ENCODE measurements at regions of chr3 and their contacts with region 1.

Region 1: GRCh38 chr3:133040696-133041523 is 2.7 kb downstream of the TMEM108 start:
- DNase-seq: peak; percentile 68 to 80 (median 72)
- ATAC-seq: peak; percentile 80 to 91 (median 88)
- H3K4me3 ChIP-seq: no peak overlapping the region
- H3K27ac ChIP-seq: no peak overlapping the region
- H3K4me1 ChIP-seq: peaks cover 0 to 19% (median 5%) of the 10 kb centered on the region in 12 donors
- H3K27me3 ChIP-seq: peaks cover 9 to 38% (median 24%) of the 10 kb centered on the region in 9 donors
- CTCF ChIP-seq: peak; percentile 53 to 80 (median 73)
- POLR2A ChIP-seq: no peak

Region 2: DNA sequence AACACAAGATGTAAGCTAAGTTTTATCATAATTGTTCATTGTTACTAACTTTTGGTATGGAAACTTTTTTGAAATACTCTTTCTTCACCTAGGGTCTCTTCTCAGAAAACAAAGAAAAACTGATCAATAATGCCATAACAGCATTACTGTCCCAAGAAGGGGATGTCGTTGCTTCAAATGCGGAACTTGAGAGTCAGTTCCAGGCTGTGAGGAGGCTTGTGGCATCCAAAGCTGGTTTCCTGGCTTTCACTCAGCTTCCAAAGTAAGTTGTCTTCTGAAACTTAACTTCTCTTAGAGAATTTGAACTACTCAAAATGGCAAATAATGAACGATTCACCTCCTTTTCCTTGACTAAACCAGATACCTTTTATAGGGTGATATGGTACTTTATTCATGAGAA is 584.3 kb before region 1 on chr3:
- intact Hi-C with region 1: no loop called
- DNase-seq: no peak
- ATAC-seq: no peak
- H3K4me3 ChIP-seq: no peak overlapping the region
- H3K27ac ChIP-seq: no peak overlapping the region
- H3K4me1 ChIP-seq: peaks cover 0 to 8% (median 0%) of the 10 kb centered on the region in 12 donors
- H3K27me3 ChIP-seq: no peaks in the 10 kb centered on the region
- CTCF ChIP-seq: no peak
- POLR2A ChIP-seq: no peak

Region 3: DNA sequence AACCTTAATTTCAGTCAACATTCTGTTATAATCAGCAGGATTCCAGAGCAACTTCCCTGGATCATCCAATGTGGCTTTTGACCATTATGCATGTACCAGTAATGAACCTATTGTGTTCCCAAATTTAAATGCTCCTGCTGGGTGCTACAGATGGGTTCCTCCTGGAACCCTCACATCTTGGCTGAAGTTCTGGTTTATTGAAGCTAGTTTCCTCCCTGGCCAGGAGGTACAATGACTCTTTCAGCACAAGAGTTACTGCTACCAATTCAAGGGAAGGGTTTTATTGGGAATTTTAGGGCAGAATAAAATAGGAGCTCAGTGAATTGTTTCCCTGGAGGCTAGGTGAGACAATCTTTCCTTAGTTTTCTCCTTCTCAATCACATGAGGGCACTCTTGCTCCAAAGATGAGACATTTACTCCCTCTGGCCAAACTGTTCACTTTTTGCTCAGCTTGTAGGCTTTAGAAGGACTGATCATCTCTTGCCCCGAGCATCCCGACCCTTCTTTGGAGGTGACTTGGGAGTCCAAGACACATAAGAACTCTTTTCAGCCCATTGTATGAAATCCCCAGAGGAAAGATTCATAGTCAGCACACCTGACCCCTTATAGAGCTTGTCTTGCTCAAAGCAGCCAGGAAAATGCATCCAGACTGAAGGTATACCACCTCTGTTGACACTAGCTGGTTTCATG is 309.9 kb before region 1 on chr3:
- intact Hi-C with region 1: loop called in 8 of 10 experiments (anchors 2 to 10 kb)
- DNase-seq: peak in 2 of 5 donors; percentile 14 to 18
- ATAC-seq: peak; percentile 42 to 83 (median 71)
- H3K4me3 ChIP-seq: no peak overlapping the region
- H3K27ac ChIP-seq: no peak overlapping the region
- H3K4me1 ChIP-seq: peaks cover 0 to 2% (median 0%) of the 10 kb centered on the region in 12 donors
- H3K27me3 ChIP-seq: peaks cover 0 to 4% (median 0%) of the 10 kb centered on the region in 9 donors
- CTCF ChIP-seq: peak in 11 of 12 donors; percentile 18 to 61 (median 44)
- POLR2A ChIP-seq: no peak

Region 4: DNA sequence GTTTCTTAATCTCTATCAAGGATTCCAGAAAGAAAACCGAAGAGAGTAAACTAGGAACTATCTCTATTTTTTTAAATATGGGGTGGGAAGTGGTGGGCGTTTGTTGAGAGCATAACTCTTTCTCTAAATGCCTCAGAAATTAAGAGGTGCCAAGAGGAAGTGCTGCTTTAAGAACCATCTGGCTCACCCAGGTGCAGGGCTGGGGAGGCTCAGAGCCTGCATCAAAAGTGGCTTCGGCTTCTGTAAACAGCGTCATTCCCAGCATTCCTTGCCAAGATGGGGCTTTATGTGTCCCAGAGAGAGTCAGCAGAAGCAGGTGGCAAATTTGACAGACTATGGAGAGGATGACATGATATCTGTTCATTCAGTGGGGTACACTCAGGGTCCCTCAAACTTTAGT is 235.7 kb after region 1 on chr3:
- intact Hi-C with region 1: no loop called
- DNase-seq: no peak
- ATAC-seq: no peak
- H3K4me3 ChIP-seq: no peak overlapping the region
- H3K27ac ChIP-seq: no peak overlapping the region
- H3K4me1 ChIP-seq: no peaks in the 10 kb centered on the region
- H3K27me3 ChIP-seq: no peaks in the 10 kb centered on the region
- CTCF ChIP-seq: no peak
- POLR2A ChIP-seq: no peak

Region 5: DNA sequence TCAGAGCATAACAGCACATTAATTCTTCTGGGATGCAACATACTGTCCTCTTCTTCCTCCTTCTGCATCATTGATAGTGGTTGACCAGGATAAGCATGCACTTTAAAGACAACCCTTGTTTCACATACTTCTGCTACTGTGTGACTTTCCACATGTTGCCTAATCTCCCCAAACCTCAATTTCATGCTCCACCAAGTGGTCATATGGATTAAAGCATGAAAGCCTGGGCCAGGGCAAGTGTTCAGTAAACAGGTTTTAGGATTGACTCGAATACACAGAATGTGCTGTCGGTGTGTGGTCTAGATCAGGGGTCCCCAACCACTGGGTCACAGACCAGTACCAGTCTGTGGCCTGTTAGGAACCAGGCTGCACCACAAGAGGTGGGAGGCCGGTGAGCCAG is 336.5 kb after region 1 on chr3:
- intact Hi-C with region 1: loop called in 9 of 10 experiments (anchors 1 to 5 kb)
- DNase-seq: no peak
- ATAC-seq: peak in 3 of 4 donors; percentile 47 to 73 (median 51)
- H3K4me3 ChIP-seq: no peak overlapping the region
- H3K27ac ChIP-seq: no peak overlapping the region
- H3K4me1 ChIP-seq: peaks cover 0 to 8% (median 0%) of the 10 kb centered on the region in 12 donors
- H3K27me3 ChIP-seq: no peaks in the 10 kb centered on the region
- CTCF ChIP-seq: peak; percentile 18 to 54 (median 40)
- POLR2A ChIP-seq: no peak

Region 6: GRCh38 chr3:133384331-133385027 is 343.6 kb after region 1 on chr3:
- intact Hi-C with region 1: loop called in 5 of 10 experiments (anchors 1 to 5 kb)
- DNase-seq: peak; percentile 45 to 78 (median 56)
- ATAC-seq: peak; percentile 87 to 94 (median 91)
- H3K4me3 ChIP-seq: no peak overlapping the region
- H3K27ac ChIP-seq: no peak overlapping the region
- H3K4me1 ChIP-seq: peaks cover 0 to 8% (median 0%) of the 10 kb centered on the region in 12 donors
- H3K27me3 ChIP-seq: peaks cover 0 to 3% (median 0%) of the 10 kb centered on the region in 9 donors
- CTCF ChIP-seq: peak; percentile 56 to 85 (median 76)
- POLR2A ChIP-seq: no peak

Region 7: GRCh38 chr3:133426721-133427120 is 385.8 kb after region 1 on chr3:
- intact Hi-C with region 1: loop called in 4 of 10 experiments (anchors 1 to 5 kb)
- DNase-seq: no peak
- ATAC-seq: peak in 1 of 4 donors; percentile 39
- H3K4me3 ChIP-seq: no peak overlapping the region
- H3K27ac ChIP-seq: no peak overlapping the region
- H3K4me1 ChIP-seq: peaks cover 0 to 5% (median 0%) of the 10 kb centered on the region in 12 donors
- H3K27me3 ChIP-seq: peaks cover 0 to 19% (median 6%) of the 10 kb centered on the region in 9 donors
- CTCF ChIP-seq: no peak
- POLR2A ChIP-seq: no peak

Region 8: GRCh38 chr3:133851266-133851906 is 810.5 kb after region 1 on chr3:
- intact Hi-C with region 1: no loop called
- DNase-seq: no peak
- ATAC-seq: no peak
- H3K4me3 ChIP-seq: no peak overlapping the region
- H3K27ac ChIP-seq: no peak overlapping the region
- H3K4me1 ChIP-seq: peaks cover 0 to 33% (median 13%) of the 10 kb centered on the region in 12 donors
- H3K27me3 ChIP-seq: no peaks in the 10 kb centered on the region
- CTCF ChIP-seq: no peak
- POLR2A ChIP-seq: no peak